Activated CD4-positive, alpha-beta memory T cell treated with anti-CD3 and anti-CD28 coated beads for 36 hours (primary cell): ENCODE measurements at regions of chr14 and their contacts with region 1.

Region 1: GRCh38 chr14:106268013-106268727 is 741.8 kb downstream of the TMEM121 start:
- DNase-seq: peak; percentile 90
- H3K4me3 Mint-ChIP-seq: no peak overlapping the region
- H3K27ac Mint-ChIP-seq: no peak overlapping the region
- H3K4me1 Mint-ChIP-seq: peaks cover 8% of the 10 kb centered on the region
- H3K27me3 Mint-ChIP-seq: peaks cover 12% of the 10 kb centered on the region

Region 2: DNA sequence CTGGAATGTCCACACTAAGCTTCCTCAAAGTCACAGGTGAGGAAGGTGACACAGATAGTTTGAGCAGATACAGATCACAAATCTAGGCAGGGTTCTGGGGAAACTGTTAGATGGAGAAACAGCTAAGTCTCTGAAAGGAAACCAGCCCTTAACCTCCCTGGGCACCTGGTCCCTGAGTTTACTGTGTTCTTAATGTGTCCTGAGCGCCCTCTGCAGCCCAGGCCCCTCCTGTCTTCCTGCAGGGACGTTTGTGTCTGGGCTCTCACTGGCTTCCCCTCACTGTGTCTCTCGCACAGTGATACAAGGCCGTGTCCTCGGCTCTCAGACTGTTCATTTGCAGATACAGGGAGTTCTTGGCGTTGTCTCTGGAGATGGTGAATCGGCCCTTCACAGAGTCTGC is 57.5 kb before region 1 on chr14:
- CTCF ChIA-PET with region 1: no interaction called
- POLR2A ChIA-PET with region 1: no interaction called
- intact Hi-C with region 1: loop called (anchors 2 kb)
- DNase-seq: peak; percentile 60
- H3K4me3 Mint-ChIP-seq: no peak overlapping the region
- H3K27ac Mint-ChIP-seq: no peak overlapping the region
- H3K4me1 Mint-ChIP-seq: peaks cover 17% of the 10 kb centered on the region
- H3K27me3 Mint-ChIP-seq: peaks cover 4% of the 10 kb centered on the region